Activated naive CD4-positive, alpha-beta T cell treated with anti-CD3 and anti-CD28 coated beads for 36 hours (primary cell): ENCODE measurements at regions of chr14 and their contacts with region 1.

Region 1: GRCh38 chr14:50321009-50321660 is 9.0 kb downstream of the DMAC2L start:
- DNase-seq: peak; percentile 80
- H3K4me3 Mint-ChIP-seq: no peak overlapping the region
- H3K27ac Mint-ChIP-seq: no peak overlapping the region
- H3K4me1 Mint-ChIP-seq: peaks cover 25% of the 10 kb centered on the region
- H3K27me3 Mint-ChIP-seq: no peaks in the 10 kb centered on the region

Region 2: GRCh38 chr14:49862089-49862673 is 459.0 kb before region 1 on chr14:
- CTCF ChIA-PET with region 1: no interaction called
- intact Hi-C with region 1: loop called (anchors 1 kb)
- DNase-seq: peak; percentile 91
- H3K4me3 Mint-ChIP-seq: no peak overlapping the region
- H3K27ac Mint-ChIP-seq: no peak overlapping the region
- H3K4me1 Mint-ChIP-seq: peaks cover 14% of the 10 kb centered on the region
- H3K27me3 Mint-ChIP-seq: peaks cover 2% of the 10 kb centered on the region

Region 3: DNA sequence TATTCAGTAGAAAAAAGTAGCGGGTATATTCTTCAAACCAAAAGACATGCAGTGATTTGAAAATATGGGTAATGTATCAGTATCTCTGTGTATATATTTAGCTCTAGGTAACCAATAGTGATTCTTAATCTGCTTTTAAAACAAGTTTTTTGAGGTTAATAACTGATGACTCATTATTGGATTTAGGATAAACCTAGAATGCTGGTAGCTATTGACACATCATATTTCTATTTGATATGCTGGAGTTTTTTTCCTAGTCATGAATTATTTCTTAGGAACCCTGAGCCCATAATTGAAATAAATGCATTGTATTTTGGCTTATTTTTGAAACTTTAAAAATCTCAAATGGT is 412.7 kb before region 1 on chr14:
- CTCF ChIA-PET with region 1: no interaction called
- intact Hi-C with region 1: no loop called
- DNase-seq: no peak
- H3K4me3 Mint-ChIP-seq: no peak overlapping the region
- H3K27ac Mint-ChIP-seq: no peak overlapping the region
- H3K4me1 Mint-ChIP-seq: peaks cover 40% of the 10 kb centered on the region
- H3K27me3 Mint-ChIP-seq: no peaks in the 10 kb centered on the region

Region 4: DNA sequence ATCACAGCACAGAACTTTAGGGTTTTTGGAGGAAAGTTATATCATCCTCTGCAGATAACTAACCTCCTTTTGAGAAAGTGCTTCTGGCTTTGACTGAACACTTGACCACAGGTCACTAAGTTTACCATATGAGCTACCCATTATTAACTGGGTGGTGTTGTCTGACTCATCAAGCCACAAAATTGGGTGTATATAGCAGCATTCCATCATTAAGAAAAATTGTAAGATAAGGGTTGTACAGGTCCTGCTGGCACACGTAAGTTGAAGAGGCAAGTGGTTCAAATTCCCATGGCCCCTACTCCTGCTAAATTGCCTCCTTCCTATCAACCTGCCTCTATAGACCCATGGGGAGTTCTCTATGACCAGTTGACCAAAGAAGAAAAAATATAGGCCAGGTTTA is 48.6 kb before region 1 on chr14:
- CTCF ChIA-PET with region 1: no interaction called
- intact Hi-C with region 1: no loop called
- DNase-seq: no peak
- H3K4me3 Mint-ChIP-seq: no peak overlapping the region
- H3K27ac Mint-ChIP-seq: no peak overlapping the region
- H3K4me1 Mint-ChIP-seq: no peaks in the 10 kb centered on the region
- H3K27me3 Mint-ChIP-seq: no peaks in the 10 kb centered on the region

Region 5: GRCh38 chr14:50351016-50351415 is 29.9 kb after region 1 on chr14:
- CTCF ChIA-PET with region 1: interaction called, 10 read pairs
- intact Hi-C with region 1: no loop called
- DNase-seq: no peak
- H3K4me3 Mint-ChIP-seq: no peak overlapping the region
- H3K27ac Mint-ChIP-seq: no peak overlapping the region
- H3K4me1 Mint-ChIP-seq: peaks cover 3% of the 10 kb centered on the region
- H3K27me3 Mint-ChIP-seq: no peaks in the 10 kb centered on the region

Region 6: DNA sequence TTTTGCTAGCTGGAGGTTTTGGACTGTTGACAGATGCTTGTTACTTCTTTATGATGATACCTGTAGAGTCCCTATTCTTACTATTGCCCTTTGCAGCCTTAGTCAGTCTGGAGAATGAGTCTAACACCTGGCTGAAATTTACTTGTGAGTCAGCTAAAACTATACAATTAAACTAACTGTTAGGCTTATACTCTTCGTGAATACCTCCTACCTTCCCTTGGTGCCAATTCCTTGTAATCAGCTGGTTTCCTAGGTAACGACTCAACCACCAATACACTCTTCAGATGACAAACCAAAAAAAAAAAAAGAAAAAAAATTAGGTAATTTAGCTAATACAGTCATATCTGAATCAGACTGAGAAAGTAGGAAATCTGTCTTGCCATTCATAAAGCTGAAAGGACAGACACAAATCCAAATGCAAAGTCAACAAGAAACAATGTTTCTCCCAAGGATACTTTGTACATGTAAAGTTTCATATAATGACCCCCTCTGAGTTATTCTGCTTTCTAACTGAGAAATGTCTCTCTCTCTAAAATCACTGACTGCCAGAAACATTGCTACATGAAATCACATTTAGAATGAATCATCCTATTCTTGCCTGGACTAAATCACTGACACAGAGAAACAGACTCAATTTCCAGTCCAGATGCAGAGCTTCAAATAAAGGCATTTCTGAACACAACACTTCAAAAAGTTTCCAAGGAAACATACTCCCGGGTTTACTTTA is 132.0 kb after region 1 on chr14:
- CTCF ChIA-PET with region 1: no interaction called
- intact Hi-C with region 1: loop called (anchors 1 kb)
- DNase-seq: no peak
- H3K4me3 Mint-ChIP-seq: no peak overlapping the region
- H3K27ac Mint-ChIP-seq: no peak overlapping the region
- H3K4me1 Mint-ChIP-seq: peaks cover 12% of the 10 kb centered on the region
- H3K27me3 Mint-ChIP-seq: no peaks in the 10 kb centered on the region

Region 7: GRCh38 chr14:50726372-50727107 is 405.4 kb after region 1 on chr14:
- CTCF ChIA-PET with region 1: no interaction called
- intact Hi-C with region 1: loop called (anchors 1 kb)
- DNase-seq: peak; percentile 48
- H3K4me3 Mint-ChIP-seq: peak overlapping the region; percentile 3
- H3K27ac Mint-ChIP-seq: peak overlapping the region; percentile 83
- H3K4me1 Mint-ChIP-seq: peaks cover 28% of the 10 kb centered on the region
- H3K27me3 Mint-ChIP-seq: no peaks in the 10 kb centered on the region

Region 8: DNA sequence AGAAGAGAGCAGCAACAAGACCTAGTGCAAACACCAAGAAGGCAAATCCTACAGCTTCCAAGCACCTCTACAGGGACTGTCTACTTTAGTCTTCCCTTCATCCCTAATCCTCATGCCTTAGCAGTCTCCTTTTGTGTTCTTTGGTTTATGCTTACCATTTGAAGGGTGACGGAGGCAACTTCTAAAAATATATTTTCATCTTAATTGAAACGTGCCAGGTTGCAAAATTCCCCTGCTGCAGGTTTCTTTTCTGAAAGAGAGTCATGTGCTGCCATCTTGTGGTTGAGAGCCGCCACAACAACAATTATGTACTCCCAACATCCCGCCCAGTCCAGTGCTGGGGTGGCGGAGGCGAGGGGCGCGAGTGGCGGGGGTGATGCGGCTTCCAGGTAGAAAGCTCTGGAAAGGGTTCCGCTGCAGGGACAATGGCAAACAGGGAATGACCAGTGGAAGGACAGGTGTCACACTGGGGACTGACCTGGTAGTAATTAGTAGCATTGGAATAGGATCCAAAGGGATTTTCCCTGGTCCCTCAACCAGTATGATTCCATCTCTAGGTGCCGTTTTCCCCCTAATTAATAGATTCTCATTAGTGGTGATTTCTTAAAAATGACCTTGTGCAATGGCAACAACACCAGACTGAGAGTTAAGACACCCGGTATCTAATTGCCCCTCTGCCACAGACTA is 1459.0 kb after region 1 on chr14:
- CTCF ChIA-PET with region 1: no interaction called
- intact Hi-C with region 1: loop called (anchors 10 kb)
- DNase-seq: peak; percentile 88
- H3K4me3 Mint-ChIP-seq: peak overlapping the region; percentile 0
- H3K27ac Mint-ChIP-seq: no peak overlapping the region
- H3K4me1 Mint-ChIP-seq: peaks cover 42% of the 10 kb centered on the region
- H3K27me3 Mint-ChIP-seq: no peaks in the 10 kb centered on the region